Posterior vena cava (tissue), 2 donors: ENCODE measurements at regions of chr14 and their contacts with region 1.

Region 1: GRCh38 chr14:49339130-49339529 is 247.1 kb downstream of the RPS29 start:
- DNase-seq: no peak

Region 2: DNA sequence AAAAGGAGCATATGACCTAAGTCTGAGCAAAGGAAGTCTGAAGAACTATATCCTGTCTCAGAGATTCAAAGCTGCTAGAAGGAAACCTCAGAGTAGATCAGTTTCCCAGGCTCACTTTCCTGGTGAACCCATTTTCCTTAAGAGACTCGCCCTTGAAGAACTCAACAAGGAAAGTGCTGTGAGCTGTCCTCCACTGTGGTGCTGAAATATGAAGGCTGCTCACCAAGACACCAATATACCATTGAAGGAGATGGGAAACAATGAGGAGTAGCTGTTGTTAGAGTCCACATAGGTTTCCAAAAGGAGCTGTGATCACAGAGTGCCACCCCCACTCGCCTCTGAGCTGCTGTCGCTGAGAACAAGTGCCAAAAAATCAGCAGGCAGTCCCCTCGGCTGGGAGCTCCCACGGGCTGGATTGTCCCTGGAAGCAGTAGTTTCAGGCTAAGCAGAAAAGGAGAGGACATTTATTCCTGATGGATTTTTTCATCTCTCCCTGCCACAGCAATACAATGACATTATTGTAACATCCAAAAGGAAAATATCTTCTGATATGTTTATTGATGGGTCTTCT is 35.1 kb before region 1 on chr14:
- intact Hi-C with region 1: loop called in 1 of 2 experiments (anchors 2 kb)
- DNase-seq: no peak